SK-N-SH (cell line): ENCODE measurements at regions of chr17 and their contacts with region 1.

Region 1: GRCh38 chr17:76014184-76014924 is 12.8 kb downstream of the EVPL start:
- DNase-seq: peak; percentile 97
- H3K4me3 ChIP-seq: no peak overlapping the region
- H3K27ac ChIP-seq: no peak overlapping the region
- H3K4me1 ChIP-seq: peaks cover 10 to 13% of the 10 kb centered on the region in 2 experiments; a peak in 2 of 4 replicates
- H3K27me3 ChIP-seq: no peaks in the 10 kb centered on the region
- CTCF ChIP-seq: peak; percentile 99
- EP300 ChIP-seq: no peak
- RAD21 ChIP-seq: peak; percentile 95

Region 2: GRCh38 chr17:75904749-75905521 is 109.4 kb before region 1 on chr17 and contains the start of gene MRPL38:
- CTCF ChIA-PET with region 1: interaction called, 44 read pairs
- POLR2A ChIA-PET with region 1: interaction called, 4 read pairs
- DNase-seq: peak; percentile 99
- H3K4me3 ChIP-seq: peak within 1 kb of the TSS; percentile 70 to 88
- H3K27ac ChIP-seq: peak within 1 kb of the TSS; percentile 66 to 86
- H3K4me1 ChIP-seq: peaks cover 4 to 13% of the 10 kb centered on the region in 2 experiments; a peak in 2 of 4 replicates
- H3K27me3 ChIP-seq: no peaks in the 10 kb centered on the region
- CTCF ChIP-seq: peak; percentile 99
- EP300 ChIP-seq: peak in 1 of 2 experiments; percentile 56; a peak in 1 of 4 replicates
- RAD21 ChIP-seq: peak; percentile 94
- polyA plus RNA-seq, gene MRPL38: 62.5 and 93.9 TPM in 2 replicates

Region 3: GRCh38 chr17:76050538-76051480 is 36.5 kb after region 1 on chr17:
- CTCF ChIA-PET with region 1: interaction called, 18 read pairs
- POLR2A ChIA-PET with region 1: no interaction called
- DNase-seq: no peak
- H3K4me3 ChIP-seq: no peak overlapping the region
- H3K27ac ChIP-seq: no peak overlapping the region
- H3K4me1 ChIP-seq: no peaks in the 10 kb centered on the region
- H3K27me3 ChIP-seq: no peaks in the 10 kb centered on the region
- CTCF ChIP-seq: no peak
- EP300 ChIP-seq: no peak
- RAD21 ChIP-seq: no peak

Region 4: GRCh38 chr17:76072148-76072858 is 57.9 kb after region 1 on chr17 and contains the start of gene SRP68:
- CTCF ChIA-PET with region 1: interaction called, 64 read pairs
- POLR2A ChIA-PET with region 1: interaction called, 5 read pairs
- DNase-seq: peak; percentile 100
- H3K4me3 ChIP-seq: peak within 1 kb of the TSS; percentile 78 to 82
- H3K27ac ChIP-seq: peak within 1 kb of the TSS; percentile 41 to 63; a peak in 3 of 4 replicates
- H3K4me1 ChIP-seq: peaks cover 0 to 17% of the 10 kb centered on the region in 2 experiments; a peak in 3 of 4 replicates
- H3K27me3 ChIP-seq: peaks cover 39% of the 10 kb centered on the region
- CTCF ChIP-seq: no peak
- EP300 ChIP-seq: peak in 1 of 2 experiments; percentile 72; a peak in 1 of 4 replicates
- RAD21 ChIP-seq: 0 out of 2 replicates have a peak, but pooled peaks have one; percentile 8
- polyA plus RNA-seq, gene SRP68: 76.8 and 81.4 TPM in 2 replicates

Region 5: GRCh38 chr17:76132574-76133338 is 118.4 kb after region 1 on chr17:
- CTCF ChIA-PET with region 1: interaction called, 12 read pairs
- POLR2A ChIA-PET with region 1: no interaction called
- DNase-seq: no peak
- H3K4me3 ChIP-seq: no peak overlapping the region
- H3K27ac ChIP-seq: no peak overlapping the region
- H3K4me1 ChIP-seq: no peaks in the 10 kb centered on the region
- H3K27me3 ChIP-seq: no peaks in the 10 kb centered on the region
- CTCF ChIP-seq: no peak
- EP300 ChIP-seq: no peak
- RAD21 ChIP-seq: no peak

Region 6: GRCh38 chr17:76296186-76296585 is 281.8 kb after region 1 on chr17:
- CTCF ChIA-PET with region 1: interaction called, 18 read pairs
- POLR2A ChIA-PET with region 1: no interaction called
- DNase-seq: no peak
- H3K4me3 ChIP-seq: no peak overlapping the region
- H3K27ac ChIP-seq: no peak overlapping the region
- H3K4me1 ChIP-seq: no peaks in the 10 kb centered on the region
- H3K27me3 ChIP-seq: no peaks in the 10 kb centered on the region
- CTCF ChIP-seq: no peak
- EP300 ChIP-seq: no peak
- RAD21 ChIP-seq: no peak